Mammary epithelial cell (primary cell): ENCODE measurements at regions of chr17 and their contacts with region 1.

Region 1: GRCh38 chr17:75978938-75979704 is at the starts of genes ACOX1 and TEN1:
- DNase-seq: peak; percentile 94
- H3K4me3 ChIP-seq: peak within 1 kb of the TSS; percentile 68 to 90 (median 87)
- H3K27ac ChIP-seq: peak within 1 kb of the TSS; percentile 91
- H3K4me1 ChIP-seq: peaks cover 13% of the 10 kb centered on the region
- H3K27me3 ChIP-seq: no peaks in the 10 kb centered on the region
- CTCF ChIP-seq: peak in 1 of 2 donors; percentile 37
- total RNA-seq, gene ACOX1: 37.7 to 88.0 TPM
- total RNA-seq, gene TEN1: 17.5 to 18.3 TPM

Region 2: DNA sequence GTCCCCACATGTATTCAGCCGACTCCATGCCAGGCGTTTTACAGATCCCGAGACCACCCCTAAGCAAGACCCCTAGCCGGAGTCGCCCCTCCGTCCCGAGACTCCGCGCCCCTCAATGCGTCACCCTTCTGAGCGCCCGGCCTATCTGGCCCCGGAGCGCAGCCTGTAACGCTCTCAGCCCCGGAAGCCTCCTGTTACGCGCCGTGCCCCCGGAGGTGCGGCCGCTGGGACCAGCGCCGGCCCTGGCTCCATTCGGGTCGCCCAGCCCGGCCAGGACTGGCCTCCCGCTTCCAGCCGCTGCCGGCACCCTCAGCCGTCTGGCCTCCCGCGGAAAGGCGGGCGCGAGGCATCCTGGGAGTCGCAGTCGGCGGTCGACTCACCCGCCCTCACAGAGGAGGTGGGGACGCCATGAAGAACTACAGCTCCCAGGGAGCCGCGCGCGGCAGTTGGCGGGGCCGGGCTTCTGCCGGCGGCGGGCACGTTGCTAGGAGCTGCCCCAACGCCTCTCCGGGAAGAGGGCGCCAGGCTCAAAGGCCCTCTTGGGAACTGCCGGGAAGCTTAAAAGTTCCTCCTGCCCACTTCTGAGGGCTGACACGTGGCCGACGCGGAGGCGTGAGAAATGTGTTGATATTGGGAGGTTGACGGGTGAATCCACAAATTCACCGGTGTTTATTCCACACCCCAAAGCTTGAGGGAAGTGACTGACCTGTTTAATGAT is 38.2 kb before region 1 on chr17 and contains the start of gene FBF1:
- CTCF ChIA-PET with region 1: no interaction called
- dilution Hi-C with region 1: no loop called
- in situ Hi-C with region 1: no loop called
- intact Hi-C with region 1: loop called (anchors 1 kb)
- DNase-seq: peak; percentile 96
- H3K4me3 ChIP-seq: peak within 1 kb of the TSS; percentile 73 to 93 (median 87)
- H3K27ac ChIP-seq: peak within 1 kb of the TSS; percentile 60
- H3K4me1 ChIP-seq: peaks cover 3% of the 10 kb centered on the region
- H3K27me3 ChIP-seq: no peaks in the 10 kb centered on the region
- CTCF ChIP-seq: no peak
- total RNA-seq, gene FBF1: 12.0 to 13.5 TPM

Region 3: DNA sequence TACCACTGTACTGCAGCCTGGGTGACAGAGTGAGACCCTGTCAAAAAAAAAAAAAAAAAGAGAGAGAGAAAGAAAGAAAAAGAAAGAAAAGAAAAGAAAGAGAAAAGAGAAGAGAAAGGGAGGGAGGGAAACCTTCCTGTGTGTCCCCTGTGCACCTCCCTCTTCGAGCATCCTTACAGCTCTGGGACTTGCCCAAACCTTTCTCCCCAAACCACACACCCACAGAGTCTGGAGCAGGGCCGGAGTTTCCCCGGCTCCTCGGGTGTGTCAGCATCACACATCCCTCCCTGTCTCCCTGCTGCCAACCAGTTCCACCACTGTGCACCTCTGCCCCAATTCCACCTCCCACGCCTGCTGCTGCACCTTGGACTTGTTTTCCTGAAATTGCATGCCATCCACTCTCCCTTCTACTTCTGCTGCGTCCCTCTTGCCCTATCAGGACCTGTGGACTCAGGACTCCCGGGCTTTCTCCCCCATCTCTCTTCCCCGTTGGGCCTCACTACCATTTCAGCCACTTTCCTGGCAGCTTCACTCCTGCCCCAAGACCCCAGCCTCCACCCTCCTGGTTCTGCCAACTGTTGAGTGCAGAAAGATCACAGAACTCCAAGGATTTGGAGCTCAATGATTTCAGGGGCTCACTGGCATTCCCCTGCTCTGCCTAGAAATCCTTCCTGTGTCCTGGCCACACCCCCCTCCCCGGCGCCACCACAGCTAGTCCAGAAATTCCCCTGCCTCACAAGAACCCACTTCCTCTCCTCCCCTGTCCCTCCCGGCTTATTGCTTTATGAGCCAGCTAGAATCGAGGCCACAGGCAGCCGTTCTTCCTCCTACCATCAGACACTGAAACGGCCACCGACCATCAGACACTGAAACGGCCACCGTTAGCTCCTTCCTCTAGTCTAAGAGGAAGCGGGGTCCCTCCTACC is 17.8 kb after region 1 on chr17:
- CTCF ChIA-PET with region 1: no interaction called
- dilution Hi-C with region 1: no loop called
- in situ Hi-C with region 1: no loop called
- intact Hi-C with region 1: loop called (anchors 2 kb)
- DNase-seq: peak; percentile 97
- H3K4me3 ChIP-seq: peak overlapping the region in 1 of 3 experiments; percentile 18
- H3K27ac ChIP-seq: peak overlapping the region; percentile 91
- H3K4me1 ChIP-seq: peaks cover 23% of the 10 kb centered on the region
- H3K27me3 ChIP-seq: no peaks in the 10 kb centered on the region
- CTCF ChIP-seq: no peak

Region 4: GRCh38 chr17:76027159-76027839 is 48.2 kb after region 1 on chr17 and contains the start of gene EVPL:
- CTCF ChIA-PET with region 1: no interaction called
- dilution Hi-C with region 1: no loop called
- in situ Hi-C with region 1: no loop called
- intact Hi-C with region 1: no loop called
- DNase-seq: peak; percentile 87
- H3K4me3 ChIP-seq: no peak within 1 kb of the TSS
- H3K27ac ChIP-seq: no peak within 1 kb of the TSS
- H3K4me1 ChIP-seq: peaks cover 8% of the 10 kb centered on the region
- H3K27me3 ChIP-seq: no peaks in the 10 kb centered on the region
- CTCF ChIP-seq: no peak
- total RNA-seq, gene EVPL: 1.0 to 6.2 TPM